Endothelial cell of umbilical vein (primary cell): ENCODE measurements at regions of chr9 and their contacts with region 1.

Region 1: GRCh38 chr9:107637421-107638420 is 148.2 kb upstream of the KLF4 start:
- DNase-seq: peak; percentile 99
- H3K4me3 ChIP-seq: peak overlapping the region; percentile 4 to 66 (median 36)
- H3K27ac ChIP-seq: peak overlapping the region; percentile 91
- H3K4me1 ChIP-seq: peaks cover 14% of the 10 kb centered on the region
- H3K27me3 ChIP-seq: no peaks in the 10 kb centered on the region
- CTCF ChIP-seq: peak; percentile 13 to 34
- POLR2A ChIP-seq: peak; percentile 80

Region 2: DNA sequence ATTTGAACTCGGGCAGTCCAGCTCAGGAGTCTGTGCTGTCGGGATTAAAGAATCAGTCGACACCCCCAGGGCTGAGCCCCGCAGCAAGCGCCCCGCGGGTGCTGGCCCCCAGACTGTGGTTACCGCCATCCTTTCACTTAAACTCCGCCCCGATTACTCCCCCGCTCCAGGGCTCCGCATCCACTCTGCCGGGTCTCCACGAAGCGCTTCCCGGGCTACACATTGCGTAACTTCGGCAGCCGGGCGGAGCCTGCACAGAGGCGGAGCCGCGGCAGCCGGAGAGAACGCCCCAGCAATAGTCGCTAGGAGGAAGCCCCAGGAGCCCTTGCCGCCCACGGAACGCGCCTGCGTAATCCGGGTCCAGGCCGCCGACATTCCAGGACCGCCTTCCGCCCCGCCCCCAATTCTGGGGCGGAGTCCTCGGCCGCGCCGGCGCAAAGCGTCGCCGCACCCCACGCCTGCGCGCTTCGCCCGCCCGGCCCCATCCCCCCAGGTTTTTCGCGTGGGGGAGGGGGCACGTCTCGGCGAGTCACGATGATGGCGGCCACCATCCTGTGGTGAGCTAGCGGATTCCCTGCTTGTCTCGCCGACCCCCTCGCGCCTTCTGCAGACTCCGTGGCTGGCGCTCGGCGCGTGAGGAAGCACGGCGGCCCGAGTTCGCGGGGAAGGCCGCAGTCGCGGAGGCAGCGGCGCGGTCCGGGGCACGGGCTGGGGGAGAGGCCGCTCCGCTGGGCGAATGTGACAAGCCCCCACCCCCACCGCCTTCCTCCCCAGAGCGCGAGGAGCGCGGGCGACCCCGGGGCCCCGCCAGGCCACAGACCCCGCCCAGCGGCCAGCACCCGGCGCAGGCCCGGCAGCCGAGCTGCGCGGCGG is 354.7 kb before region 1 on chr9 and contains the start of gene RAD23B:
- CTCF ChIA-PET with region 1: no interaction called
- POLR2A ChIA-PET with region 1: no interaction called
- dilution Hi-C with region 1: no loop called
- intact Hi-C with region 1: loop called (anchors 1 kb)
- DNase-seq: peak; percentile 99
- H3K4me3 ChIP-seq: peak within 1 kb of the TSS; percentile 54 to 93 (median 92)
- H3K27ac ChIP-seq: peak within 1 kb of the TSS; percentile 82
- H3K4me1 ChIP-seq: peaks cover 14% of the 10 kb centered on the region
- H3K27me3 ChIP-seq: no peaks in the 10 kb centered on the region
- CTCF ChIP-seq: no peak
- POLR2A ChIP-seq: peak; percentile 73
- total RNA-seq, gene RAD23B: 100 and 102 TPM in 2 replicates

Region 3: GRCh38 chr9:107587191-107587963 is 50.3 kb before region 1 on chr9:
- CTCF ChIA-PET with region 1: no interaction called
- POLR2A ChIA-PET with region 1: no interaction called
- dilution Hi-C with region 1: no loop called
- intact Hi-C with region 1: loop called (anchors 1 kb)
- DNase-seq: peak; percentile 69
- H3K4me3 ChIP-seq: peak overlapping the region in 2 of 3 experiments; percentile 10 to 38
- H3K27ac ChIP-seq: peak overlapping the region; percentile 58
- H3K4me1 ChIP-seq: peaks cover 12% of the 10 kb centered on the region
- H3K27me3 ChIP-seq: no peaks in the 10 kb centered on the region
- CTCF ChIP-seq: no peak
- POLR2A ChIP-seq: no peak

Region 4: GRCh38 chr9:107667231-107668070 is 29.7 kb after region 1 on chr9:
- CTCF ChIA-PET with region 1: no interaction called
- POLR2A ChIA-PET with region 1: no interaction called
- dilution Hi-C with region 1: no loop called
- intact Hi-C with region 1: loop called (anchors 1 kb)
- DNase-seq: peak; percentile 41
- H3K4me3 ChIP-seq: no peak overlapping the region
- H3K27ac ChIP-seq: no peak overlapping the region
- H3K4me1 ChIP-seq: peaks cover 9% of the 10 kb centered on the region
- H3K27me3 ChIP-seq: no peaks in the 10 kb centered on the region
- CTCF ChIP-seq: no peak
- POLR2A ChIP-seq: no peak

Region 5: GRCh38 chr9:107749787-107750444 is 112.2 kb after region 1 on chr9:
- CTCF ChIA-PET with region 1: no interaction called
- POLR2A ChIA-PET with region 1: interaction called, 7 read pairs
- dilution Hi-C with region 1: no loop called
- intact Hi-C with region 1: loop called (anchors 1 kb)
- DNase-seq: peak; percentile 84
- H3K4me3 ChIP-seq: no peak overlapping the region
- H3K27ac ChIP-seq: peak overlapping the region; percentile 60
- H3K4me1 ChIP-seq: peaks cover 46% of the 10 kb centered on the region
- H3K27me3 ChIP-seq: no peaks in the 10 kb centered on the region
- CTCF ChIP-seq: no peak
- POLR2A ChIP-seq: peak; percentile 7

Region 6: GRCh38 chr9:108053555-108054061 is 415.9 kb after region 1 on chr9:
- CTCF ChIA-PET with region 1: no interaction called
- POLR2A ChIA-PET with region 1: no interaction called
- dilution Hi-C with region 1: no loop called
- intact Hi-C with region 1: loop called (anchors 2 kb)
- DNase-seq: peak; percentile 75
- H3K4me3 ChIP-seq: no peak overlapping the region
- H3K27ac ChIP-seq: peak overlapping the region; percentile 23
- H3K4me1 ChIP-seq: peaks cover 55% of the 10 kb centered on the region
- H3K27me3 ChIP-seq: no peaks in the 10 kb centered on the region
- CTCF ChIP-seq: no peak
- POLR2A ChIP-seq: no peak

Region 7: GRCh38 chr9:108150736-108151586 is 513.2 kb after region 1 on chr9:
- CTCF ChIA-PET with region 1: no interaction called
- POLR2A ChIA-PET with region 1: no interaction called
- dilution Hi-C with region 1: no loop called
- intact Hi-C with region 1: loop called (anchors 1 kb)
- DNase-seq: peak; percentile 87
- H3K4me3 ChIP-seq: no peak overlapping the region
- H3K27ac ChIP-seq: peak overlapping the region; percentile 83
- H3K4me1 ChIP-seq: peaks cover 28% of the 10 kb centered on the region
- H3K27me3 ChIP-seq: no peaks in the 10 kb centered on the region
- CTCF ChIP-seq: no peak
- POLR2A ChIP-seq: no peak